Gastrocnemius medialis (tissue), 4 donors: ENCODE measurements at regions of chr14 and their contacts with region 1.

Region 1: GRCh38 chr14:49633640-49634546 is 1.2 kb downstream of the DNAAF2 start:
- DNase-seq: peak; percentile 91
- ATAC-seq: peak; percentile 88 to 89
- H3K4me3 ChIP-seq: peak overlapping the region; percentile 83 to 99 (median 90)
- H3K27ac ChIP-seq: peak overlapping the region; percentile 92 to 100 (median 97)
- H3K4me1 ChIP-seq: peaks cover 18 to 34% of the 10 kb centered on the region in 2 donors
- H3K27me3 ChIP-seq: no peaks in the 10 kb centered on the region
- CTCF ChIP-seq: peak; percentile 67 to 88 (median 81)
- POLR2A ChIP-seq: peak; percentile 90 to 91

Region 2: GRCh38 chr14:49585803-49586672 is 47.9 kb before region 1 on chr14 and contains the start of gene RPS29:
- in situ Hi-C with region 1: loop called in 1 of 4 experiments (anchors 10 kb)
- intact Hi-C with region 1: loop called (anchors 2 kb)
- DNase-seq: peak; percentile 97 to 98
- ATAC-seq: peak; percentile 99
- H3K4me3 ChIP-seq: peak within 1 kb of the TSS; percentile 78 to 99 (median 93)
- H3K27ac ChIP-seq: peak within 1 kb of the TSS; percentile 94 to 98 (median 96)
- H3K4me1 ChIP-seq: peaks cover 27 to 29% of the 10 kb centered on the region in 2 donors
- H3K27me3 ChIP-seq: no peaks in the 10 kb centered on the region
- CTCF ChIP-seq: no peak
- POLR2A ChIP-seq: peak; percentile 94 to 96
- total RNA-seq, gene RPS29: 6,799 to 10,395 (median 8,793) TPM

Region 3: DNA sequence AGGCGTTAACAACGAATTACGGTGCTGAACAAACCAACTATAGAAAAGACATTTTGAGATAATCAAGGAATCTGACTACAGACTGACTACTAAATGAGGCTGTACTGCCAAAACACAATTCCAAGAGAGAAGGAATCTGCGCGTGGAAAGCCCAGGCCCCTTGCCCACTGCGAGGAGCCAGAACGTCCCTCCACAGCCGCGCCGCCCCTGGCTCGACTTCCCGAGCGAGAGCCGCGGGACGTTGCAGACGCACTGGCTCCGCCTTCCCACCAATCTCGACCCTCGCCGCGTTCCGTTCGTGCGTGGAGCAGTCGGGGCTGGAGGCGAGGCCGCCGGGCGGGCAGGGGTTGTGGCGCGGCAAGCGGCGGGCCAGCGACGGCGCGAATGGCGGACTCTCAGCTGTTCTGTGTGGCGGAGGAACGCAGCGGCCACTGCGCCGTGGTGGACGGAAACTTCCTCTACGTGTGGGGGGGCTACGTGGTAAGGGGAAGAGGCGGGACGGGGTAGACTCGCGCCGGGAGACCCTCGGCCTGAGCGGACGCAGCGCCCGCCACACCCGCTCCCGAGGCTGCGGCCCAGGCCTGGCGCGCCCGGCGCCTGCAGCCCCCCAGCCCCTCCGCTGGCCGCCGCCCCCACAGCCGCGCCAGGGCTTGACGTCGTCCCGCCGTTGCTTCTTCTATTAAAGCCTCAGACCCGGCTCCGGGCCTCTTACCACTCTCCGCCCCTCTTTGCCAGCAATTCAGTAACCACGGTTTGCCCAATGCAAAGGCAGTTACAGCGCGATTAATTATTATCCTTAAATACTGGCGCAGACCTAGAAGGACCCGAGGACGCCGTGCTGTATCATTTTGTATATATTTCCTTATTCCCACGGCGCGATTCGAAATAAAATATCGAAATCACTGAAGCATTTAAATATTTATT is 59.2 kb after region 1 on chr14 and contains the start of gene KLHDC1:
- in situ Hi-C with region 1: no loop called
- intact Hi-C with region 1: loop called (anchors 1 kb)
- DNase-seq: peak; percentile 65 to 82
- ATAC-seq: peak; percentile 84 to 85
- H3K4me3 ChIP-seq: peak within 1 kb of the TSS; percentile 65 to 78 (median 69)
- H3K27ac ChIP-seq: peak within 1 kb of the TSS; percentile 85 to 91 (median 90)
- H3K4me1 ChIP-seq: peaks cover 5 to 11% of the 10 kb centered on the region in 2 donors
- H3K27me3 ChIP-seq: no peaks in the 10 kb centered on the region
- CTCF ChIP-seq: no peak
- POLR2A ChIP-seq: peak; percentile 85 to 88
- total RNA-seq, gene KLHDC1: 4.1 to 7.2 (median 4.7) TPM

Region 4: DNA sequence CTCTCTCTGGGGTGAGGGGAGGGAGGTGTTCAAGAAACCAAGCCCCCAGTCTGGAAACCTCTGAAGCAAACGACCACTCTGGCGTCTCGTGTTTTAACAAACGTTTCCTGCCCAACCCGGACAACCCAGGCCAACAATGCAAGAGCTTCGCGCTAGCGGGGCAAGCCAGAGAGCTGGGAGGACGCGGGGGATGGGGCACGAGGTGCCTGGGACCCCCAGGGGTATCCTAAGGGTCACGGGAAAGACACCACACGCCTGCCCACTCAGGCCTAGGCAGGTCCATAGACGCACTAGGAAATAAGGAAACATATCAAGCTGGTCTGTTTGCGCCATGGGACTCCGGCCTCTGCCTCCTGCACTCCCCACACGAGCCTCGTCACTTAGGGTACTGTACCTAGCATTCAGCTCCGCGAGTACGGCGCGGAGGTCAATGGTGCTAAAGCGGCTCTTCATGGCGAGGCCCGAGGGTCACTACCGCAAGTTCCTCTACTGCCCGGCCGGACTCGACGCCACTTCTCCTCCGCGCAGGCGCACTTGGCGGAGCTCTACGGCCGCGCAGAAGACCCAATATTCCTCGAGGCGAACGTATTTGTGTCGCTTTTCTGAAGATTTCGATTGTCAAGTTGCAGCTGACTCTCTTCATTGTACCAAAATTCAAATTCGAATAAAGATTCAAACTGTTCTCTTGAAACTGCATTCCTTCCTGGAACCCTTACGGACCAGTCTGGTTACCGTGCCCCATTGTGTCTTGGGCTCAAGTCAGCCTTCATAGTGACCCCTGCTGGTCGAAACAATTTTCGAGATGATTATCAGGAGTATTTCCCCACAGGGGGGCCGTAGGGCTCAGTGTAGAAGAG is 218.6 kb after region 1 on chr14 and contains the start of gene NEMF:
- in situ Hi-C with region 1: loop called in 2 of 4 experiments (anchors 25 kb)
- intact Hi-C with region 1: loop called (anchors 2 kb)
- DNase-seq: peak; percentile 71 to 83
- ATAC-seq: peak; percentile 81
- H3K4me3 ChIP-seq: peak within 1 kb of the TSS; percentile 78 to 95 (median 86)
- H3K27ac ChIP-seq: peak within 1 kb of the TSS; percentile 92 to 98 (median 96)
- H3K4me1 ChIP-seq: peaks cover 37 to 39% of the 10 kb centered on the region in 2 donors
- H3K27me3 ChIP-seq: no peaks in the 10 kb centered on the region
- CTCF ChIP-seq: peak; percentile 76 to 92 (median 78)
- POLR2A ChIP-seq: peak; percentile 79 to 82
- total RNA-seq, gene NEMF: 56.5 to 71.1 (median 65.2) TPM

Region 5: GRCh38 chr14:50116181-50116956 is 482.5 kb after region 1 on chr14 and contains the start of gene VCPKMT:
- in situ Hi-C with region 1: loop called in 2 of 4 experiments (anchors 25 kb)
- intact Hi-C with region 1: no loop called
- DNase-seq: peak; percentile 82 to 90
- ATAC-seq: peak; percentile 94 to 95
- H3K4me3 ChIP-seq: peak within 1 kb of the TSS; percentile 75 to 87 (median 82)
- H3K27ac ChIP-seq: peak within 1 kb of the TSS; percentile 86 to 92 (median 90)
- H3K4me1 ChIP-seq: peaks cover 14% of the 10 kb centered on the region in 2 donors
- H3K27me3 ChIP-seq: no peaks in the 10 kb centered on the region
- CTCF ChIP-seq: peak in 1 of 5 experiments; percentile 7
- POLR2A ChIP-seq: peak; percentile 77 to 86
- total RNA-seq, gene VCPKMT: 2.2 to 7.3 (median 4.9) TPM